ENCODE measurements at regions of chr2 and their contacts with region 1.

Region 1: GRCh38 chr2:38602732-38603401 is at the start of gene HNRNPLL:
- DNase-seq: peak; percentile 96 to 99 (median 98)
- ATAC-seq: peak; percentile 93
- H3K4me3 ChIP-seq: peak within 1 kb of the TSS; percentile 62 to 84
- H3K27ac ChIP-seq: peak within 1 kb of the TSS; percentile 97 to 98
- H3K4me1 ChIP-seq: peaks cover 25 to 47% of the 10 kb centered on the region in 2 donors
- H3K27me3 ChIP-seq: no peaks in the 10 kb centered on the region
- CTCF ChIP-seq: no peak
- polyA plus RNA-seq, gene HNRNPLL: 71.3 to 102 (median 79.3) TPM

Region 2: GRCh38 chr2:38665854-38666555 is 63.1 kb after region 1 on chr2 and contains the start of gene GALM:
- intact Hi-C with region 1: loop called in 1 of 2 experiments (anchors 10 kb)
- DNase-seq: peak; percentile 81 to 95 (median 88)
- ATAC-seq: peak; percentile 95
- H3K4me3 ChIP-seq: peak within 1 kb of the TSS; percentile 58 to 72
- H3K27ac ChIP-seq: peak within 1 kb of the TSS; percentile 87 to 88
- H3K4me1 ChIP-seq: peaks cover 0 to 58% of the 10 kb centered on the region in 2 donors
- H3K27me3 ChIP-seq: no peaks in the 10 kb centered on the region
- CTCF ChIP-seq: no peak
- polyA plus RNA-seq, gene GALM: 21.2 to 33.6 (median 25.8) TPM